Activated CD4-positive, alpha-beta T cell treated with anti-CD3 and anti-CD28 coated beads, Interleukin-2, amount 10 ng/mL, durations not matched to agents 24 days and 14 days (primary cell): ENCODE measurements at regions of chr1 and their contacts with region 1.

Region 1: DNA sequence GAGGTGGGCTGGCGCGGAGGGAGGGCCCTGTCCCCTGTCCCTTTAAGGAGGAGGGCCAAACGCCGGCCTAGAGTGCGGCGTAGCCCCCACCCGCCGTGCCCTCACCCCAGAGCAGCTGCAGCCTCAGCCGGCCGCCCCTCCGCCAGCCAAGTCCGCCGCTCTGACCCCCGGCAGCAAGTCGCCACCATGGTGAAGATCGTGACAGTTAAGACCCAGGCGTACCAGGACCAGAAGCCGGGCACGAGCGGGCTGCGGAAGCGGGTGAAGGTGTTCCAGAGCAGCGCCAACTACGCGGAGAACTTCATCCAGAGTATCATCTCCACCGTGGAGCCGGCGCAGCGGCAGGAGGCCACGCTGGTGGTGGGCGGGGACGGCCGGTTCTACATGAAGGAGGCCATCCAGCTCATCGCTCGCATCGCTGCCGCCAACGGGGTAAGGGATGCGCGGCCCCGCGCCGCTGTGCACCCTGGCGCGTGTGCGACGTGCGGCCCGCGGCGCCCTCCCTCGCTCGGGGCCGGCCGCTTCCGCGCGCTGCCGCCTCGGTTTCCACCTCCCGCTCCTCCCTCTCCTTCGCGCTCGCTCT is at the start of gene PGM1:
- DNase-seq: peak; percentile 93
- H3K4me3 Mint-ChIP-seq: peak within 1 kb of the TSS; percentile 98
- H3K27ac Mint-ChIP-seq: peak within 1 kb of the TSS; percentile 100
- H3K4me1 Mint-ChIP-seq: peaks cover 36% of the 10 kb centered on the region
- H3K27me3 Mint-ChIP-seq: no peaks in the 10 kb centered on the region
- total RNA-seq, gene PGM1: 47.3 and 47.9 TPM in 2 replicates

Region 2: DNA sequence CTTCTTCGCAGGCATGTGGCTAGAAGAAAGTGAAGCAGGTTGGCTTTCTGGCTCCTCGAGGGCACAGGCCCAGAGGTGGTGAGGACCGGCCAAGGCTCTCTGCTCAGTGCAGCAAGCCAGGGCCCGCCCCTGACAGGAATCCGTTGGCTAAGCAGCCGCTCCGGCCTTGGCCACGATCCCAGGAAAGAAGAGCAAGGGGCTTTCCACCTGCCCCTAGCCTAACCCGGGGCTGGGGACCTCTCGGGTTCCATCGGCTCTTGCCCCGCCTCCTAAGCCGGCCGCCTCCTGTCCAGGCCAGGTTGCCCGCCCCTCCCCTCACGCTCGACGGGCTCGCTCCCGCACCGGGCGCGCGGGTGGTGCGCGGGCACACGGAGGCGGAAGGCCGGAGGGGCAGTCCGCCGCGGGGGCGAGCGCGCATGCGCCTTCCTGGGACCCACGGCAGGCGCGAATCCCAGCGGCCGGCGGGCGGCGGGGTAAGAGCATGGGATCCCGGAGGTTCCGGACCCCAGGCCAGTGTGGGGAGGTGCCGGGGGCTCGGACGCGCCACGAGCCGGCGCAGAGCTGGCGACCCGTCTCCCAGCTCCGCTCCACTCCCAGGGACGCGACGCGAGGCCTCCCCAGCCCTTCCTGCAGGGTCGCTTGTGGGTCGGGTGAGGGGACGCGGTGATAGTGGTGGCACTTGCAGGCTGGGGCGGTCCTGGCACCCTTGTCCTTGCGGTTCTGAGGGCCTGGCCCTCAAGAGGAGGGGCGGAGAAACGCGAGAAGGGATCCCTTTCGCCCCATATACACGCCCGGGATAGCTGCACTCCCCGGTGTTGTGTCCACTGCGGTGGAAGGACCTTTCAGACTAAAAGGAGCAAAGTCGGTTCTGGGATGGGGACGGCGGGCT is 225.9 kb before region 1 on chr1 and contains the start of gene ALG6:
- intact Hi-C with region 1: loop called (anchors 2 kb)
- DNase-seq: peak; percentile 99
- H3K4me3 Mint-ChIP-seq: peak within 1 kb of the TSS; percentile 99
- H3K27ac Mint-ChIP-seq: peak within 1 kb of the TSS; percentile 93
- H3K4me1 Mint-ChIP-seq: peaks cover 15% of the 10 kb centered on the region
- H3K27me3 Mint-ChIP-seq: peaks cover 14% of the 10 kb centered on the region
- total RNA-seq, gene ALG6: 24.5 and 27.7 TPM in 2 replicates

Region 3: DNA sequence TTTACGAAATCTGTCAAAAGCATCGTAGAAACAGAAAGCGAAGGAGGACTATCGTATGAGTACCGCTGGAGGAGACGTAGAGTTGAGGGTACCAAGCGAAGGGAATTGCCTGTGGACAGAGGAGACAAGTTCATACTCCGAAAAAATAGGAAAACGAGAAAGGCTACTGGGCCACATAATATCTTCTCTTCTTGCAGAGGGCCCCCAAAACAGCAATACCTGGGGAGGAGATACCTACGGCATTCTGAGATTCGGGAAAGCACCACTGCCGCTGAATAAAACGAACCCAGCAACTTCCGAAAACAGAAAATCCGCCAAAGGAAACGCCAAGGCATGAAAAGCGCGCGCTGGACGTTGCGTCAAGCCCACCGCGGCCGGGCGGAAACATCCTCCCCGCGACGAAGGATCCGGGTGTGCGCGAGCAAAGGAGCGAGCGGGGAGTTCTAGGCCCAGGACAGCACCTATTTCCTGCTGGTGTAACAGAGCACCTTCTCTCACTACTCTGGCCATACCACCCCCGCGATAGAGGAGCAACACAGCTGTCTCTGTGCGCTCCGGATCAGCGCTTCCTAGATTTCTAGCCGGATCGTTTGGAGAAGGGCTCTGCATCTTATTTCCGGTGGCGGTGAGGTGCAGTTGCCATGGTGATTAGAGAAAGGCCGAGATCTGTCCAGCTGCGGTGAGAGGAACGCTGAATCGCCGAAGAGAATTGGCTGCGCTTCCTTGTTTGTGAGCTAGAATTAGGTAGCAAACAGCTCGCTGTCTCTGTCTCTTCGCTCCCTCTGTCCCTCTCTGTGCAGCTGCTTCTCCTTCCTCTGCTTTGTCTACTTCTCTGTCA is 70.3 kb before region 1 on chr1 and contains the starts of genes EFCAB7 and ITGB3BP:
- intact Hi-C with region 1: loop called (anchors 1 kb)
- DNase-seq: peak; percentile 96
- H3K4me3 Mint-ChIP-seq: peak within 1 kb of the TSS; percentile 87
- H3K27ac Mint-ChIP-seq: peak within 1 kb of the TSS; percentile 98
- H3K4me1 Mint-ChIP-seq: peaks cover 29% of the 10 kb centered on the region
- H3K27me3 Mint-ChIP-seq: no peaks in the 10 kb centered on the region
- total RNA-seq, gene EFCAB7: 6.6 and 7.8 TPM in 2 replicates
- total RNA-seq, gene ITGB3BP: 51.1 and 53.4 TPM in 2 replicates

Region 4: DNA sequence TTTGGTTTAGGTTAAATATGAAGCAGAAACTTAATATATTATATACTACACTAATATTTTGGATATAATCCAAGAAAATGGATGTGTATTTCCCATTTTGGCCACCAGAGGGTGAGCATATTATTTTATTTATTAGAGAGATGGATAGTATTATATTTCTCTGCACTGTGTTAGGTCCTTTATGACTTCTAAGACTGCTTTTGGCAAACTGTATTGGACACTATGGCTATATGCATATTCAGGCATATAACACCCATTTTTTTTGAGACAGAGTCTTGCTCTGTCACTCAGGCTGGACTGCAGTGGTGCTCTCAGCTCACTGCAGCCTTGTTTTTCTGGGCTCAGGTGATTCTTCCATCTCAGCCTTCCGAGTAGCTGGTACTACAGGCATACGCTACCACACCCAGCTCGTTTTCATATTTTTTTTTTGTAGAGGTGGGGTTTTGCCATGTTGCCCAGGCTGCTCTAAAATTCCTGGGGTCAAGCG is 18.0 kb before region 1 on chr1:
- intact Hi-C with region 1: loop called (anchors 2 kb)
- DNase-seq: peak; percentile 57
- H3K4me3 Mint-ChIP-seq: no peak overlapping the region
- H3K27ac Mint-ChIP-seq: no peak overlapping the region
- H3K4me1 Mint-ChIP-seq: no peaks in the 10 kb centered on the region
- H3K27me3 Mint-ChIP-seq: no peaks in the 10 kb centered on the region

Region 5: DNA sequence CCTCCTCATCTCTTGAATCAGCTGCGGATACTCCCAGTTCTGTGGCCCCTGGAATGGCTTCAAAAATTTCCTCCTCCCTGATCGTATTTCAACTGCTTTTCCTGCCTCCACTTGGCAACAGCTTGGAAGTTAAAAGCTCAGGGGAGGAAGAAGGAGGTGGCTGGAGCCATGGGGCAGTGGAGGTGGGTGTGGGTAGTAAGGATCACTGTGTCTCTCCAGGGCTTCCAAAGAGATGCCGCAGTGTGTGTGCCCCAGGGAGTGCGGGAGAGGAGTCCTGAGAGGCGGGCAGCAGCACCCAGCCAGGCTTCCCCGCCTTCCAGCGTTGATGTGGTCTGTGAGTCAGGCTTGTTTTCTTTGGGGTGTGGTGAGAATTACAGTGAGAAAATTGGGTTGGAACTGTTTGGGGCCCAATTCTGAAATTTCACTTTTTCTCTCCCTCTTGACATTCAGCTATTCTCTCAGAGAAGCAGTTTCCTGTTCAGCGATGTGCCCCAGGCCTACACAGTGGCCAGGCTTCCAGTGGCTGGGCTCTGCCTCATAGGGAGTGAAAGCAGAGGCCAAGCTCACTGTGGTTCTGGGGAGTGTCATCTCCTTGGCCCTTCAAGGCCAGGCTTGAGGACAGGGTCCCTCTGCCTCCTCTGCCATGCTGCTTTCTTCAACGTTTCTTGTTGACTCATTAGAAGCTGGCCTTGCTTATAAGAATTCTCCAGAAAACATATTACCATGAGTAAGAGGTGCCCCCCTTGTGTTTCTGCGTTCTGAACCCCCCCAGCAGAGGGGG is 68.9 kb after region 1 on chr1:
- intact Hi-C with region 1: no loop called
- DNase-seq: no peak
- H3K4me3 Mint-ChIP-seq: no peak overlapping the region
- H3K27ac Mint-ChIP-seq: peak overlapping the region; percentile 45
- H3K4me1 Mint-ChIP-seq: peaks cover 29% of the 10 kb centered on the region
- H3K27me3 Mint-ChIP-seq: no peaks in the 10 kb centered on the region